ENCODE measurements at regions of chr7 and their contacts with region 1.

Region 1: DNA sequence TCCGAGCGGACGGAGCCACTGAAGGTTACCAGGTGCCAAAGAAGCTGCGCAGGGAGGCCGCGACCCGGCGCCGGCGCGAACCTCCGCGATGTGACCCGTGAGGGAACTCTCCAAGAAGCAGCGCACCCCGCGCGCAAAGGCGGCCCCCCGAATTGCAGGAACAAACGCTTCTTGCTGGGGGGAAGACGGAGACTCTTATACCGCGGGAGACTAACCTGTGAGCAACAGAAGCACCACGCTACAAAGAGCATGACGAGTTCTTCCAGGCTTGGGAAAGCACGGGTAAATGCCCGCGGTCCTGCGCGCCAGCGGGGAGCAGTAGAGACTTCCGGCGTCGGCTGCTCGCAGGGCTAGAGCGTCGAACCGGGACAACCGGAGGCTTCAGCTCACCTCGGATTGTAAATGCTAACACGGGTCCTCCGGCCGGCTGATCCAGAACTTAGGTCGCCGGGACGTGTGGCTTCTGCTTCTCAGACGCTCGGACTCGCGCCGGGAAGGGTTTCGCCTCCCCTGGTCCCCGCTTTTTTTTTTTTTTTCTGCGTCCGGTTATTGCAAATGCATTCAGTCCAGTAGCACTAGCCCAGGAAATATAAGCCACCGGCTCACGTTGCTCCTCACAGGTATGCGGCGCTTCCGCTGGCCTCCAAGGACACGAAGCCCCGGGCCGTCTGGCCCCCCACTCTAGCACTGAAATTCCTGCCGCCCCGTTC is at the start of gene COA1:
- DNase-seq: peak; percentile 87
- H3K4me3 Mint-ChIP-seq: peak within 1 kb of the TSS; percentile 90
- H3K27ac Mint-ChIP-seq: peak within 1 kb of the TSS; percentile 89
- H3K4me1 Mint-ChIP-seq: peaks cover 35% of the 10 kb centered on the region
- H3K27me3 Mint-ChIP-seq: peaks cover 7% of the 10 kb centered on the region
- total RNA-seq, gene COA1: 85.9 to 87.2 TPM

Region 2: DNA sequence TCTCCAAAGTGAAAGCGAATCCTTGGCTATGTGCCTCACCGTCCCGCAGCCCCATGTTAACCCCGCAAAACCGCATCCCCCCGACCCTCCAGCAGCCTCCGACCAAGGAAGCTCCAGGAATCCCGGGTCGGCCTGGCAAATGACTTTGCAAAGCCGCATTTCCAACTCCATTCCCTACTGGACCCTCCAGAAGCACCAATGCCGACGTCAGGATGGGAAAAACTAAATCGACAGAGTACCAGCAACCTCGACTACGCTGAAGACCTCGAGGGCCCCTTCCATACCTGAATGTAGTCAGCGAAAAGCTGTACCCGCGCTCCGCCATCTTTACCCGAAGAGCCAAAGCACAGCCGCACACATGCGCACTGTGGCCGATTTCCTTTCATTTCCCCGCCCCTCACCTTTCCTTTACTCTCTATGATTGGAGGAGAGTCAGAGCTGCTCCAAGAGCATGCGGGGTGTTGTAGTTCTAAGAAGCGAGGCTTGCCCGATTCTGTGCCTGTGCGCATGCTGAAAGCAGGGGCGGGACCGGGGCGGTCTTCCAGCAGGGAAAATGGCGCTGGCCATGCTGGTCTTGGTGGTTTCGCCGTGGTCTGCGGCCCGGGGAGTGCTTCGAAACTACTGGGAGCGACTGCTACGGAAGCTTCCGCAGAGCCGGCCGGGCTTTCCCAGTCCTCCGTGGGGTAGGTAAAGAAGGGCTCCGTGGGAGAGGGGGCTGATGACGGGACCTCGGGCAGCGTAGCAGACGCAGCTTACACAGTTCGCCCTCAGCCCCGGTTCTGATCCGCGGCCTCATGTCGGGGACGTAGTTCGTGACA is 797.3 kb before region 1 on chr7 and contains the starts of genes MRPL32 and PSMA2:
- CTCF ChIA-PET with region 1: no interaction called
- intact Hi-C with region 1: loop called (anchors 2 kb)
- DNase-seq: peak; percentile 95
- H3K4me3 Mint-ChIP-seq: peak within 1 kb of the TSS; percentile 100
- H3K27ac Mint-ChIP-seq: peak within 1 kb of the TSS; percentile 100
- H3K4me1 Mint-ChIP-seq: peaks cover 60% of the 10 kb centered on the region
- H3K27me3 Mint-ChIP-seq: no peaks in the 10 kb centered on the region
- total RNA-seq, gene MRPL32: 67.4 to 71.8 TPM
- total RNA-seq, gene PSMA2: 199 to 221 TPM

Region 3: GRCh38 chr7:43758029-43758821 is 28.9 kb after region 1 on chr7 and contains the start of gene BLVRA:
- CTCF ChIA-PET with region 1: interaction called, 4 read pairs
- intact Hi-C with region 1: loop called (anchors 1 kb)
- DNase-seq: peak; percentile 66
- H3K4me3 Mint-ChIP-seq: peak within 1 kb of the TSS; percentile 71
- H3K27ac Mint-ChIP-seq: no peak within 1 kb of the TSS
- H3K4me1 Mint-ChIP-seq: peaks cover 43% of the 10 kb centered on the region
- H3K27me3 Mint-ChIP-seq: no peaks in the 10 kb centered on the region
- total RNA-seq, gene BLVRA: 26.6 to 28.9 TPM

Region 4: DNA sequence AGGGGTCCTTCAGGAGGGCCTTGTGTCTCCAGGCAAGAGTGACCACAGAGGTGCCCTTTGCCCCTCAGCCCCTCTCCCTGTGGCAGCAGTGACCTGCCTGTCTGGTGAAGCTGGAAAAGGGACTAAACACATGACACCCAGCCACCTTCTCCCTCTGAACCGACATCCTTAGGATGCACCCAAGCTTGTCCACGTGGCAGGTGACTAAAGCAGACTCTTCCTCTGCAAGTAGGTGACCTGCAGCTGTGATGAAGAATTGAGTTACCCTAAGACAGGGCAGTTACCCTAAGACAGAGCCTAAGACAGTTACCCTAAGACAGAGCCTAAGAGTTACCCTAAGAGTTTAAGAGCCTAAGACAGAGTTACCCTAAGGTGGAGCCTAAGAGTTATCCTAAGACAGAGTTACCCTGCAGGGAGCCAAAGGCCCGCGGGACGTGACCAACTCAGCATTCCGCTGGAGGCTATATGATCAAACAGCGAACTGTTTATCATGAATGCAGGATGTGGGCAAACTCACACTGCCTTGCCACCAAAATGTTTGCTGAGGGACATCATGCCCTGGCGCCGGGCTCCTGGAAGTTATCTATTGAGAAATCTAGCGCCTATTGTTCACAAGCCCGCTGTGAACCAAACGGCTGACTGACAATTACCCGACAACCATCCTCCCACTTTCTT is 78.9 kb after region 1 on chr7:
- CTCF ChIA-PET with region 1: no interaction called
- intact Hi-C with region 1: loop called (anchors 5 kb)
- DNase-seq: no peak
- H3K4me3 Mint-ChIP-seq: no peak overlapping the region
- H3K27ac Mint-ChIP-seq: no peak overlapping the region
- H3K4me1 Mint-ChIP-seq: no peaks in the 10 kb centered on the region
- H3K27me3 Mint-ChIP-seq: peaks cover 4% of the 10 kb centered on the region